Mammary epithelial cell (primary cell): ENCODE measurements at regions of chr3 and their contacts with region 1.

Region 1: GRCh38 chr3:112653209-112653871 is 12.4 kb upstream of the CCDC80 start:
- DNase-seq: peak; percentile 90
- H3K4me3 ChIP-seq: no peak overlapping the region
- H3K27ac ChIP-seq: peak overlapping the region; percentile 96
- H3K4me1 ChIP-seq: peaks cover 53% of the 10 kb centered on the region
- H3K27me3 ChIP-seq: no peaks in the 10 kb centered on the region
- CTCF ChIP-seq: no peak

Region 2: DNA sequence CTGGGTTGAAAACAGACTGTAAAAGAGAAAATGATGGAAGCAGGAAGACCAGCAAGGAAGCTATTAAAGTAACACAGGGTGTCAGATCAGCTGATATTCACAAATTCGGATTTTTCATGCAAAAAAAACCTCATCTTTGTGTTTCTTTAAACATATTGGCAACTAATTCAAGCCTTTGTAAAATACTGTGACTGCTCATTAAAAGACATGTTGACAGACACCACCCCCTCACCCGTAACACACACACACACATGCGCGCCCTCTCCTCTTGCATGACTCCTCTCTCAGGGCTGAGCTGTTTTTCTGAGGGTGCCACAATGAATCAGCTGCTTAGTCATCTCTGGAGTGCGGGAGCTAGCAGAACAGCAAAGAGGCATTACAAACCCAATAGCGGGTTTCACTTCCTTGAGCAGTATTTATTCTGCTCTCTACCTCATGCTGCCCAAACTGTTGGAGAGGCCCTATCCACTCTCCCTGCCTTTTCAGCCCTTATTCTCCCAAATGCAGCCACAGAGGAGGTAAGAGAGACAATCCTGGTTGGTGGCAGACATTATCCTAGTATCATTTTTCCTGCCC is 23.4 kb after region 1 on chr3:
- CTCF ChIA-PET with region 1: no interaction called
- dilution Hi-C with region 1: no loop called
- in situ Hi-C with region 1: no loop called
- intact Hi-C with region 1: loop called (anchors 2 kb)
- DNase-seq: peak; percentile 98
- H3K4me3 ChIP-seq: no peak overlapping the region
- H3K27ac ChIP-seq: peak overlapping the region; percentile 83
- H3K4me1 ChIP-seq: peaks cover 32% of the 10 kb centered on the region
- H3K27me3 ChIP-seq: no peaks in the 10 kb centered on the region
- CTCF ChIP-seq: no peak

Region 3: DNA sequence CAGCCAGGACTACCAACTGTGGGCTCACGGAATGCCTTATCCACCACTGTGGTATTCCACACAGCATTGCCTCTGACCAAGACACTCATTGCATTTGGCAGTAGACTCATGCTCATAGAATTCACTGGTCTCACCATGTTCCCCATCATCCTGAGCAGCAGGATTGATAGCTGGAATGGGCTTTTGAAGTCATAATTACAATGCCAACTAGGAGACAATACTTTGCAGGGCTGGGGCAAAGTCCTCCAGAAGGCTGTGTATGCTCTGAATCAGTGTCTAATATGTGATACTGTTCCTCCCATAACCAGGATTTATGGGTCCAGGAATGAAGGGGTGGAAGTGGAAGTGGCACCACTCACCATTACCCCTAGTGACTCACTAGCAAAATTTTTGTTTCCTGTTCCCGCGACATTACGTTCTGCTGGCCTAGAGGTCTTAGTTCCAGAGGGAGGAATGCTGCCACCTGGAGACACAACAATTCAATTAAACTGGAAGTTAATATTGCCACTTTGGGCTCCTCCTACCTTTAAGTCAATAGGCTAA is 46.2 kb after region 1 on chr3:
- CTCF ChIA-PET with region 1: no interaction called
- dilution Hi-C with region 1: no loop called
- in situ Hi-C with region 1: loop called in 1 of 2 experiments (anchors 10 kb)
- intact Hi-C with region 1: loop called (anchors 1 kb)
- DNase-seq: peak; percentile 69
- H3K4me3 ChIP-seq: no peak overlapping the region
- H3K27ac ChIP-seq: no peak overlapping the region
- H3K4me1 ChIP-seq: peaks cover 9% of the 10 kb centered on the region
- H3K27me3 ChIP-seq: no peaks in the 10 kb centered on the region
- CTCF ChIP-seq: peak in 1 of 2 donors; percentile 27

Region 4: GRCh38 chr3:112773864-112774590 is 120.7 kb after region 1 on chr3:
- CTCF ChIA-PET with region 1: no interaction called
- dilution Hi-C with region 1: no loop called
- in situ Hi-C with region 1: no loop called
- intact Hi-C with region 1: loop called (anchors 1 kb)
- DNase-seq: peak; percentile 97
- H3K4me3 ChIP-seq: no peak overlapping the region
- H3K27ac ChIP-seq: peak overlapping the region; percentile 95
- H3K4me1 ChIP-seq: peaks cover 65% of the 10 kb centered on the region
- H3K27me3 ChIP-seq: no peaks in the 10 kb centered on the region
- CTCF ChIP-seq: no peak